Right ventricle myocardium superior (tissue), 1 donor: ENCODE measurements at regions of chr13 and their contacts with region 1.

Region 1: GRCh38 chr13:24693862-24694471 is 13.8 kb downstream of the ATP12A start:
- DNase-seq: no peak
- ATAC-seq: peak; percentile 78

Region 2: DNA sequence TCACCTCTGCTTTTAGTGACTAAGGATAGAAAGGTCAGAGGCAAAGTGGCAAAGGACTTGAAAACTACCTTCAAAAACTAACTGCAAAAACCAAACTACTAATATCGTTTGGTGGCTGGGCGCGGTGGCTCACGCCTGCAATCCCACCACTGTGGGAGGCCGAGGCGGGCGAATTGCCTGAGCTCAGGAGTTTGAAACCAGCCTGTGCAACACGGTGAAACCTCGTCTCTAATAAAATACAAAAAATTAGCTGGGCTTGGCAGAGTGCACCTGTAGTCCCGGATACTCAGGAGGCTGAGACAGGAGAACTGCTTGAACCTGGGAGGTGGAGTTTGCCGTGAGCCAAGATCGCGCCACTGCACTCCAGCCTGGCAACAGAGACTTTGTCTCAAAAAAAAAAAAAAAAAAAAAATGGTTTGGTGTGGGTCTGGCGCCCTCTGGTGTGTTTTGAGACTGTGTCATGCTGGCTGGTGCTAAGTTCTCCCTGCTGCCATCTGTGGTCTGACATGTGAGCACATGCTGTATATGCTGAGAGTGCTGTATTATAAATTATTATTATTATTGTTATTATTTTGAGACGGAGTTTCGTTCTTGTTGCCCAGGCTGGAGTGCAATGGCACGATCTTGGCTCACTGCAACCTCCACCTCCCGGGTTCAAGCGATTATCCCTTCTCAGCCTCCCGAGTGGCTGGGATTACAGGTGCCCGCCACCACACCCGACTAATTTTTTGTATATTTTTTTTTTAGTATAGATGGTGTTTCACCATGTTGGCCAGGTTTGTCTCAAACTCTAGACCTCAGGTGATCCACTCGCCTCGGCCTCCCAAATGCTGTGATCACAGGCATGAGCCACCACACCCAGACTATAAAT is 34.0 kb after region 1 on chr13:
- intact Hi-C with region 1: loop called (anchors 5 kb)
- DNase-seq: peak; percentile 64
- ATAC-seq: peak; percentile 93

Region 3: GRCh38 chr13:24931450-24932251 is 237.7 kb after region 1 on chr13:
- intact Hi-C with region 1: no loop called
- DNase-seq: no peak
- ATAC-seq: no peak